ENCODE measurements at regions of chr4 and their contacts with region 1.

Region 1: DNA sequence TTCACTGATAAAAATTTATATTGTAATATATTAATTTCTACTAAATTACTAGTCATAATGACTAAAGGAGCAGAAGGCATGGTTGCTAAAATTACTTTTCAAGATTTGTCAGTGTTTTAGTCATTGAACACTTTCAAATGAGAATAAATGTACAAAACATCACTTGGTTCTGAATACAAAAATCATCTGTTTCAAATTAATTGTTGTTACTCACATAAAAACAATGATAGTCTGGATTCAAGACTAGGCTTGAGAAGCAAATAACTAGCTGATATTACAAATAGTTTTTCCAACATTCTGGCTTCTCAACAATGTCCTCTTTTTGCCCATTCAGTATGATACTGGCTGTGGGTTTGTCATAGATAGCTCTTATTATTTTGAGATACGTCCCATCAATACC is 112.5 kb downstream of the ANAPC10 start:
- DNase-seq: no peak
- H3K4me3 ChIP-seq: no peak overlapping the region
- CTCF ChIP-seq: no peak
- POLR2A ChIP-seq: no peak

Region 2: GRCh38 chr4:145320294-145320693 is 334.8 kb after region 1 on chr4:
- intact Hi-C with region 1: loop called (anchors 10 kb)
- DNase-seq: no peak
- H3K4me3 ChIP-seq: no peak overlapping the region
- CTCF ChIP-seq: no peak
- POLR2A ChIP-seq: no peak